CD8-positive, alpha-beta T cell (primary cell): ENCODE measurements at regions of chr20 and their contacts with region 1.

Region 1: DNA sequence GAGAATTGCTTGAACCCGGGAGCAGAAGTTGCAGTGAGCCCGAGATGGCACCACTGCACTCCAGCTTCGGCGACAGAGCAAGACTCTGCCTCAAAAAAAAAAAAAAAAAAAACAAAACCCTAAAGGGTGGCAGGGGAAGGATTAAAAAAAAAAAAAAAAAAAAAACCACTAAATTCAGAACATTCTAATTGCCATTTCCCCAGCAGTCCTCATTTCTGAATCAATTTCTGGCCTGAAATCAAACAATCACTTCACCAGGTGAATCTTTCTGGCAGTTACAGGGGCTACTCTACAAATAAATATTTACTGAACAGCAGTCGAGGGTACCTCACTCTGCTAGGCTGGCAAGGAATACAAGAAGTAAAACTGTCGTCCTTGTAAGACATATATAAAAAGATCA is 1.2 kb downstream of the UQCC1 start:
- DNase-seq: no peak
- ATAC-seq: no peak
- H3K4me3 ChIP-seq: no peak overlapping the region
- H3K4me3 Mint-ChIP-seq: peak overlapping the region; percentile 96
- H3K27ac ChIP-seq: no peak overlapping the region
- H3K27ac Mint-ChIP-seq: peak overlapping the region; percentile 97
- H3K4me1 ChIP-seq: peaks cover 8% of the 10 kb centered on the region
- H3K4me1 Mint-ChIP-seq: peaks cover 25% of the 10 kb centered on the region
- H3K27me3 ChIP-seq: no peaks in the 10 kb centered on the region
- H3K27me3 Mint-ChIP-seq: no peaks in the 10 kb centered on the region
- CTCF ChIP-seq: no peak

Region 2: DNA sequence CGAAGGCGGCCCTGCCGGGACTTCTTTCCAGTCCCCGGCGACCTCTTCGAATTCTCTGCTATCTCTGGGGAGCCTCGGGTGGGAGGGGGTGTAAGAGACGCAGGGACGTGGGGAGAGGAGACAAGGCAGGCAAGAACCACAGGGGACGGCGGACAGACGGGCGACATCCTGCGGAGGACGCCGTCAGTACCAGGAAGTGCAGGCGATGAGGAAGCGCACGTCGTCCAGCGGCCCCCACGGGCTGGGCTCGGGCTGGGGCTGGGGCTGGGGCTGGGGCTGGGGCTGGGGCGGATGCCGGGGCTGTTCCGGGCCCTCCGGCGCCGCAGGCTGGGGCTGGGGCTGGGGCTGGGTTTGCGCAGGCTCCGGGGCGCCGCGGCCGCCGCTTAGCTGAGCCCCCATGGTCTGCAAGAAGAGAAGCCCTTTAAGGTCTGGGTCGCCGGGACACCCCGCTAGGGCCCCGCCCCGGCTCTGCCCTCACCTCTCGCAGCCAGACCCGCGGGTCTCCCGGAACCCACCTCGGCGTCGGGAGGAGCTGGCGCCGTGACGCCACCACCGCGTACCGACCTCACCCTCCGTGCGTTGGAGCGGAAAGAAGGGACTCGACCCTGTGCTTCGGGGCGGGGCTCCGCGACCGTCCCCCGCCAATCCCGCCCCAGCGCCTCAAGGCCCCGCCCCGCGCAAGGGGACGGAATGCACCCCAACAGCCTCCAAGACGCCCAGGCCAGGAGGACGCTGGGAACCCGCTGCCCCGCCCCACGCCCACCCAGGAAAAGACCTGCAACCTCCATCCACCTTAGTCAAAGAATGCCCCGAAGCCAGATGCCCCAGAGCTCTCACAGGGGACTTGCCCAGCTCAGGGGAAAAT is 132.8 kb before region 1 on chr20 and contains the start of gene MMP24OS:
- CTCF ChIA-PET with region 1: no interaction called
- POLR2A ChIA-PET with region 1: no interaction called
- intact Hi-C with region 1: loop called in 1 of 2 experiments (anchors 5 kb)
- DNase-seq: peak; percentile 78 to 96 (median 89)
- ATAC-seq: peak; percentile 88
- H3K4me3 ChIP-seq: peak within 1 kb of the TSS; percentile 81
- H3K4me3 Mint-ChIP-seq: peak within 1 kb of the TSS; percentile 96
- H3K27ac ChIP-seq: peak within 1 kb of the TSS; percentile 92 to 99
- H3K27ac Mint-ChIP-seq: peak within 1 kb of the TSS; percentile 99
- H3K4me1 ChIP-seq: peaks cover 14% of the 10 kb centered on the region
- H3K4me1 Mint-ChIP-seq: peaks cover 28% of the 10 kb centered on the region
- H3K27me3 ChIP-seq: no peaks in the 10 kb centered on the region
- H3K27me3 Mint-ChIP-seq: no peaks in the 10 kb centered on the region
- CTCF ChIP-seq: no peak
- total RNA-seq, gene MMP24OS: 64.5 to 67.1 TPM

Region 3: DNA sequence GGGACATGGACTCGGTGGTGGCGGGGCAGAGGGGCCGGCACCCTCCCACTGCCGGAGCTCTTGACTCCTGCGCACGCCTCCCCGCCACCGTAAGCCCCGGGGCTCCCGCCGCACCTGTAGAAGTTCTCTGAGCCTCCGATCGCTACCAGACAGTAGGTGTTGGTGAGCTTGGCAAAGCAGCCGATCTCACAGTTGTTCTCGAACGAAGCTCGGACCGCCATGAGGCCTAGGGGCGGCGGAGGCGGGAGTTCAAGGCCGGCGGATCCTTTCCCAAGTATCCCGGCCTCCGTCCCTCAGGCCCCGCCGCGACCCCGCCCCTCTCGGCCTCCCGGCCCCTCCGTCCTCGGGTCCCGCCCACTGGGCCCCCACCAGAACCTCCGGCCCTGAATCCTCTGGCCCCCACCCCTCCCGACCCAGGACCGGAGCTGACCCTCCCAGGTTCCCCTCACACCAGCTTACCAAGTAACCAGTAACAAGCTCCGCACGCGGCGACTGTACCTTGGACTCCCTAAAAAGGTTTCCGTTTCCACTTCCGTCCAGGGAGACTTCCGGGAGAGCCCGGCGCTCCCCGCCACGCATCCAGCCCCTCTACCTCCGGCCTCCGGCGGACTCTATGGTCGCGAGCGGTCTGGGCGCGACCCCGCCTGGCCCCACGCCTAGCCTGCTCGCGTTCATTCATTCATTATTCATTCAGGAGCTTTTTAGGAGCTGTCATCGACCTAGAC is 126.2 kb before region 1 on chr20 and contains the start of gene EIF6:
- CTCF ChIA-PET with region 1: no interaction called
- POLR2A ChIA-PET with region 1: no interaction called
- intact Hi-C with region 1: loop called (anchors 5 kb)
- DNase-seq: peak; percentile 35 to 84 (median 71)
- ATAC-seq: peak; percentile 73
- H3K4me3 ChIP-seq: peak within 1 kb of the TSS; percentile 78 to 86
- H3K4me3 Mint-ChIP-seq: peak within 1 kb of the TSS; percentile 97
- H3K27ac ChIP-seq: peak within 1 kb of the TSS; percentile 68 to 84
- H3K27ac Mint-ChIP-seq: peak within 1 kb of the TSS; percentile 96
- H3K4me1 ChIP-seq: peaks cover 10% of the 10 kb centered on the region
- H3K4me1 Mint-ChIP-seq: peaks cover 31% of the 10 kb centered on the region
- H3K27me3 ChIP-seq: no peaks in the 10 kb centered on the region
- H3K27me3 Mint-ChIP-seq: no peaks in the 10 kb centered on the region
- CTCF ChIP-seq: no peak
- total RNA-seq, gene EIF6: 41.7 to 43.2 TPM

Region 4: DNA sequence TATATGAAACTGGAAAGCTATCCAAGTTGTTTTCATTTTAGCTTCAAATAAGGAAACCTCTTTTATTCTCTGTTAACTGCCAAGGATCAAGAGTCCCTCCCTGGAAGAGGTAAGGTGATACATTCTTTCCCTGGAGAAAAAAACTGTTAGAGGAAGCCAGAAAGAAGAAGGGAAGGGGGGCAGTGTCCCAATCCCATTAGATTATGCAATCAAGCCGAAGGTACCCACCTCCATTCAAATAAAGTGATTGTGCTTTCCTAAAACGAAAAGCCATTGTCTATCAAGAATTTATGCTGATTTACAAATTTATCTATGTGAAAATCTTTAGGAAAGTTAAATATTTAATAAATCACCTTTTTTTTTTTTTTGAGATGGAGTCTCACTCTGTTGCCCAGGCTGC is 10.7 kb after region 1 on chr20:
- CTCF ChIA-PET with region 1: no interaction called
- POLR2A ChIA-PET with region 1: no interaction called
- intact Hi-C with region 1: no loop called
- DNase-seq: no peak
- ATAC-seq: no peak
- H3K4me3 ChIP-seq: no peak overlapping the region
- H3K4me3 Mint-ChIP-seq: no peak overlapping the region
- H3K27ac ChIP-seq: no peak overlapping the region
- H3K27ac Mint-ChIP-seq: no peak overlapping the region
- H3K4me1 ChIP-seq: no peaks in the 10 kb centered on the region
- H3K4me1 Mint-ChIP-seq: no peaks in the 10 kb centered on the region
- H3K27me3 ChIP-seq: no peaks in the 10 kb centered on the region
- H3K27me3 Mint-ChIP-seq: peaks cover 18% of the 10 kb centered on the region
- CTCF ChIP-seq: no peak

Region 5: DNA sequence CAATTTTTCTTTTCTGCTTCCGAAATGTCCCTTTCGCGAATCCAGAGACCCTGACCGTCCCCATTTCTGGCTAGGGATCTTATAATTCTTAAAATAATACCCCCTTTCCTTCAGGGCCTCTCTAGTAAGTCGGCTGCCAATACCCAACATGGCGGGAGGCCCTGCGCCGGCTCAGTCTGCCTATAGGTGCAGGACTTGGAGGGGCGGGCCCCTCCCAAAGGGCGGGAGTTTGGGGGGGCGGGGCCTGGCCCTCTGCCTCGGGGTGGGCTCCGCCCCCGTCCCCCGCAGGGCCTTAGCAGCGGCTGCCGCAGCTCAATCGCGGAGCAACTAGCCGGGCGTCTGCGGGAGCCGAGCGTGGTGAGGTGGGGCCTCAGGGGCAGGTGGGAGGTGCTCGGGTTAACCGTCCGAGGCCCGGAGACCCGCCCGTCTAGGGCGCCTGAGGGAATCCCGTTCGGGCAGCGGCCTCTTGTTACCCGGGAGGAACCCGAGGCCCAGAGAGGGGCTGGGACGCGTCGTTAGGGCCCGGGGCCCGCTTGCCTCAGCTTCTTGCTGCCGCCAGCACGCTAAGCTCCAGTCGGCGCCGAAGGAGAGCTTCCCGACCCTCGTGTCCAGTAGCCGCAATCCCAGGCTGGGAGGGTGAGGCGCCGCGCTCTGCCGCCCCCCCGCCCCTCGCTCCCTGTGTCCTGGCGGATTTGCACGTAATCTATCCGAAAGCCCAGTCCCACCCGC is 44.4 kb after region 1 on chr20 and contains the start of gene CEP250:
- CTCF ChIA-PET with region 1: interaction called, 3 read pairs
- POLR2A ChIA-PET with region 1: interaction called, 3 read pairs
- intact Hi-C with region 1: loop called (anchors 1 kb)
- DNase-seq: peak; percentile 86 to 96 (median 95)
- ATAC-seq: peak; percentile 98
- H3K4me3 ChIP-seq: peak within 1 kb of the TSS; percentile 62 to 94
- H3K4me3 Mint-ChIP-seq: peak within 1 kb of the TSS; percentile 94
- H3K27ac ChIP-seq: peak within 1 kb of the TSS; percentile 52 to 94
- H3K27ac Mint-ChIP-seq: peak within 1 kb of the TSS; percentile 97
- H3K4me1 ChIP-seq: peaks cover 10% of the 10 kb centered on the region
- H3K4me1 Mint-ChIP-seq: peaks cover 21% of the 10 kb centered on the region
- H3K27me3 ChIP-seq: no peaks in the 10 kb centered on the region
- H3K27me3 Mint-ChIP-seq: no peaks in the 10 kb centered on the region
- CTCF ChIP-seq: no peak
- total RNA-seq, gene CEP250: 33.4 to 34.4 TPM

Region 6: GRCh38 chr20:35541783-35542588 is 131.4 kb after region 1 on chr20 and contains the start of gene ERGIC3:
- CTCF ChIA-PET with region 1: no interaction called
- POLR2A ChIA-PET with region 1: no interaction called
- intact Hi-C with region 1: loop called (anchors 1 to 5 kb)
- DNase-seq: peak; percentile 93 to 98 (median 97)
- ATAC-seq: peak; percentile 97
- H3K4me3 ChIP-seq: peak within 1 kb of the TSS; percentile 81 to 94
- H3K4me3 Mint-ChIP-seq: peak within 1 kb of the TSS; percentile 89
- H3K27ac ChIP-seq: peak within 1 kb of the TSS; percentile 71 to 86
- H3K27ac Mint-ChIP-seq: peak within 1 kb of the TSS; percentile 89
- H3K4me1 ChIP-seq: peaks cover 14% of the 10 kb centered on the region
- H3K4me1 Mint-ChIP-seq: peaks cover 27% of the 10 kb centered on the region
- H3K27me3 ChIP-seq: no peaks in the 10 kb centered on the region
- H3K27me3 Mint-ChIP-seq: no peaks in the 10 kb centered on the region
- CTCF ChIP-seq: no peak
- total RNA-seq, gene ERGIC3: 149 TPM

Region 7: GRCh38 chr20:36050436-36051317 is 640.1 kb after region 1 on chr20:
- CTCF ChIA-PET with region 1: no interaction called
- POLR2A ChIA-PET with region 1: no interaction called
- intact Hi-C with region 1: loop called in 1 of 2 experiments (anchors 2 kb)
- DNase-seq: peak; percentile 72 to 95 (median 89)
- ATAC-seq: peak; percentile 93
- H3K4me3 ChIP-seq: peak overlapping the region; percentile 81 to 93
- H3K4me3 Mint-ChIP-seq: peak overlapping the region; percentile 90
- H3K27ac ChIP-seq: peak overlapping the region; percentile 84 to 94
- H3K27ac Mint-ChIP-seq: peak overlapping the region; percentile 88
- H3K4me1 ChIP-seq: peaks cover 20% of the 10 kb centered on the region
- H3K4me1 Mint-ChIP-seq: peaks cover 45% of the 10 kb centered on the region
- H3K27me3 ChIP-seq: no peaks in the 10 kb centered on the region
- H3K27me3 Mint-ChIP-seq: peaks cover 2% of the 10 kb centered on the region
- CTCF ChIP-seq: no peak